ENCODE measurements at regions of chr2 and their contacts with region 1.

Region 1: DNA sequence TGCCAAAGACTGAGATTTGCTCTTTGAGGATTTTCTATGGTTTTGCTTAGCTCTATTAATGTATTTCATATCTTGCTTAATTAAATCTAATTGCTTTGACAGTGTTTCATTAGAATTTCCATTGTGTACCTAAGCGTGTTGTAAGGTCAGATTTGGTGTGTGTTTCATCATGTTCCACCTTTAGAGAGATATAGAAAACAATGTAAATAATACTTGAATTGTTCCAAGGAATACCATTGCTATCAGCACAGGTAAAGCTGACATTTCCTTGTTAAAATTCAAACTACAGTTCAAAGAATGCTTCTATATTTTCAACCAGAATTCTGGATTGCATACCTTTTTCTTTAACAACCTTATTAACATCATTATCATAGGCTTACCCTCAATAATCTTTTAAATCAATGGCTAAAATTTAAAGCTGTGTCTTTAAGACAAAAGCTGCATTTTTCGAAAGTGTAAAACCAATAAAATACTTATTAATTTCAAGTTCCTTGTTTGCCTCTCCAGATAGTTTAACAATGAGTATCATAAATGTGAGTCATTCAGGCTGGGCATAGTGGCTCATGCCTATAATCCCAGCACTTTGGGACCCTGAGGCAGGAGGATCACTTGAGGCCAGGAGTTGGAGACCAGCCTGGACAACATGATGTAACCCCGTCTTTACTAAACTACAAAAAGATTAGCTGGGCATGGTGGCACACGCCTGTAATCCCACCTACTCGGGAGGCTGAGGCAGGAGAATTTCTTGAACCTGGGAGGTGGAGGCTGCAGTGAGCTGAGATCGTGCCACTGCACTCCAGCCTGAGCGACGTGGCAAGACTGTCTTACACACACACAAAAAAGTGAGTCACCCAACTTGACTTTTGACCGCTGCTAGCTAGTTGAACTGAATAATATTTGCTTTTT is 188.0 kb upstream of the PKDCC start:
- DNase-seq: no peak
- CTCF ChIP-seq: no peak

Region 2: GRCh38 chr2:42086500-42086953 is 226.7 kb after region 1 on chr2:
- in situ Hi-C with region 1: loop called (anchors 5 kb)
- DNase-seq: peak; percentile 77
- CTCF ChIP-seq: peak; percentile 39

Region 3: GRCh38 chr2:42794271-42795046 is 934.6 kb after region 1 on chr2:
- in situ Hi-C with region 1: no loop called
- DNase-seq: no peak
- CTCF ChIP-seq: no peak